ENCODE measurements at regions of chr6 and their contacts with region 1.

Region 1: DNA sequence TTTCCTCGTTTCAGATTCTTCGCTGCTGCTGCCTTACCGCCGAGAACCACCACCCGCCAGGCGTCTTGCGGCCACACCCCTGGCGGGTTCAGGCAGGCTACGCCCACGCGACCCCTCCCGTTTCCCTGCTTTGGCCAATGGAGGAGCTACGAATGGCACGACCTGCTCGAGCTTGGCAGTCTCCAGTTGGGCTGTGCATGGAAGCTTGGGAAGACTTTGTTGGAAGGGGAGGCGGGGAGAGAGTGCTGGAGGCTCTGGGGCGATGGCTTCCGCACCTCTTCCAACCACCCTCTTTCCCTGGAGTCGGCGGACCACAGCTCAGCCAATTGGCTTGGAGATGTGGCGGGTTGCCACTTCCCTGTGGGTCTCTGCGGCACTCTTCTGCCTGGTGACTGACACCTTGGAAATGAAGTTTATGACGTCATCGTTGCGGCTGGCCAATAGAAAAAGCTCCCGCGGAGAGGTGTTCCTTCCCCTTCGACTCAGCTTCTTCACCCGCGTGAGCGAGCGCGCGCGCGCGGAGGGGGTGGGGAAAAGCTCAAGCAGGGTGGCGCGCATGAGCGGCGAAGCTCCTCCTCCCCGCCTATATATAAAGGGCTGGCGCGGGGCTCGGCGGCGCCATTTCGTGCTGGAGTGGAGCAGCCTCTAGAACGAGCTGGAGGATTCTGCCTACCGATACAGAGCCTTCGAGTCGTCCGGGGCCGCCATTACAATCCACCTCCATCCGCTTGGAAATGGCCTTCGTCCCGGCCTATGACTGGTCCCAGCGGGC is 3.4 kb downstream of the BRD2 start:
- DNase-seq: peak; percentile 99
- ATAC-seq: peak; percentile 64

Region 2: GRCh38 chr6:31971993-31972708 is 999.6 kb before region 1 on chr6 and contains the start of gene DXO:
- intact Hi-C with region 1: loop called (anchors 10 kb)
- DNase-seq: peak; percentile 98
- ATAC-seq: peak; percentile 96
- total RNA-seq, gene DXO: 9.8 TPM

Region 3: GRCh38 chr6:32195652-32195901 is 776.2 kb before region 1 on chr6:
- intact Hi-C with region 1: loop called (anchors 5 kb)
- DNase-seq: peak; percentile 100
- ATAC-seq: peak; percentile 92

Region 4: DNA sequence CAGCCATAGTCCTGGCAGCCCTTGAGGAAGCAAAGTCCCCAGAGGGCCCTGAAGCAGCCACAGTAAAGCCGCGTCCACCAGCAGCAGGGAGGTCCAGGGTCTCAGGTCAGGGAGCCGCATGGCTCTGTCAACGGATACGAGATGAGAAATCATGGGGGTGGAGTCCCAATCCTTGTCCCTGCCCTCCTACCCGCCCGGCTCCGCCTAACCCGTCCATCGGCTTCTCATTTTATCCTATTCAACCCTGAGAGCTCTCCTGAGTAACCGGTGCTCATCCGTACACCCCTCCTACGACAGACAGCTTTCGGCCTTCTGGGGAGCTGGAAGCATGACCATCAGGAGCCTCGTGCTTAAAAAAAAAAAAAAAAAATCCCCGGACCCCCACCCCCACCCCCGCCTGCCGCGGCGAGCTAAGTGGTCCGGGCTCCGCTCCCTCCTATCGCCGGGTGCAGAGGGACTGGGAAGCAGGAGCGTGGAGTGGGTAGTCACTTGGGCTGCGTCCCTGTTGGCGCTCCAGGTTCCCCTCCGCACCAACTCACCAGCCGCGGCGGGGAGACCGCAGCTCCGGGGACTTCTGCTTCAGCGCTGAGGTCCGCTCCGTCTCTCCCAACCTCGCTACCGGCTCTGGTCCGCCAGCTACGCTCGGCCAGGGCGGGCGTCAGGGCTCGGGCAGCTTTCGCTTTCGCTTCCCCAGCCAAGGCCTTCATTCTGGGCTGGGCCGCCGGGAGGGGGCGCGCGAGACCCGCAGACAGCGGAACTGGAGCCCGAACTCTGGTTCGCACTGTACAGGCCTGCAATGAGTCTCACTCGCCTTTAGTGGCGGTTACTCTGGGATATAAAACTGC is 133.4 kb before region 1 on chr6 and contains the start of gene TAP2:
- intact Hi-C with region 1: loop called (anchors 5 kb)
- DNase-seq: peak; percentile 98
- ATAC-seq: peak; percentile 97
- total RNA-seq, gene TAP2: 19.3 TPM

Region 5: GRCh38 chr6:32933636-32934085 is 38.1 kb before region 1 on chr6:
- intact Hi-C with region 1: loop called (anchors 5 kb)
- DNase-seq: peak; percentile 84
- ATAC-seq: peak; percentile 73

Region 6: GRCh38 chr6:33200219-33201146 is 228.7 kb after region 1 on chr6 and contains the starts of genes RXRB and SLC39A7:
- intact Hi-C with region 1: loop called (anchors 5 kb)
- DNase-seq: peak; percentile 100
- ATAC-seq: peak; percentile 89
- total RNA-seq, gene RXRB: 39.3 TPM
- total RNA-seq, gene SLC39A7: 55.4 TPM